PC-9 (cell line): ENCODE measurements at regions of chr9 and their contacts with region 1.

Region 1: DNA sequence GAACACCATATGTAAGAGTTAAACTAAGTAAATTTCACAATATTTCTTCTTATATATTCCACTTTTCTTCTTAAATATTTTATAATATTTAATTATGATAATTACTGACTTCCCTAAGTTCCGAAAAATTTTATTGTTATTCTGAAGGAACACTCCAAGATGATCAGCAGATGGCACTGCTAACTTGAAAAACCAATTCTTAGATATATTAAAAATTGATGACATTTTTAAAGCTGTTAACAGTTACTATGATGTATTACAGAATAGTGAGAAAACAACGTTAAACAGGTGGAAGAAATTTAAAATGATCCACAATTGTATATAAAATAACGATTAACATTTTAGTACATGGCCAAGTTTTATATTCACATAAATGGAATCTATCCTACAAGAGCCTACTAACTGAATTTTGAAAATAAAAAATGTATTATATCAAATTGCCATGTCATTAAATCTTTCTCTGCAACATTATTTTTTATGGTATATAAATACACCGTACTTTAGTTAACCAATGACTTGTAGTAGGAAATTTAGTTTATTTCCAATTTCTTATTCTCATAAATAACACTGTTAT is 30.1 kb upstream of the MUSK start:
- DNase-seq: peak in 1 of 2 experiments; percentile 52
- H3K4me3 ChIP-seq: no peak overlapping the region
- H3K27ac ChIP-seq: no peak overlapping the region
- H3K4me1 ChIP-seq: peaks cover 7% of the 10 kb centered on the region; the same call in 1 of the 2 replicates
- H3K27me3 ChIP-seq: no peaks in the 10 kb centered on the region
- CTCF ChIP-seq: peak; percentile 72

Region 2: DNA sequence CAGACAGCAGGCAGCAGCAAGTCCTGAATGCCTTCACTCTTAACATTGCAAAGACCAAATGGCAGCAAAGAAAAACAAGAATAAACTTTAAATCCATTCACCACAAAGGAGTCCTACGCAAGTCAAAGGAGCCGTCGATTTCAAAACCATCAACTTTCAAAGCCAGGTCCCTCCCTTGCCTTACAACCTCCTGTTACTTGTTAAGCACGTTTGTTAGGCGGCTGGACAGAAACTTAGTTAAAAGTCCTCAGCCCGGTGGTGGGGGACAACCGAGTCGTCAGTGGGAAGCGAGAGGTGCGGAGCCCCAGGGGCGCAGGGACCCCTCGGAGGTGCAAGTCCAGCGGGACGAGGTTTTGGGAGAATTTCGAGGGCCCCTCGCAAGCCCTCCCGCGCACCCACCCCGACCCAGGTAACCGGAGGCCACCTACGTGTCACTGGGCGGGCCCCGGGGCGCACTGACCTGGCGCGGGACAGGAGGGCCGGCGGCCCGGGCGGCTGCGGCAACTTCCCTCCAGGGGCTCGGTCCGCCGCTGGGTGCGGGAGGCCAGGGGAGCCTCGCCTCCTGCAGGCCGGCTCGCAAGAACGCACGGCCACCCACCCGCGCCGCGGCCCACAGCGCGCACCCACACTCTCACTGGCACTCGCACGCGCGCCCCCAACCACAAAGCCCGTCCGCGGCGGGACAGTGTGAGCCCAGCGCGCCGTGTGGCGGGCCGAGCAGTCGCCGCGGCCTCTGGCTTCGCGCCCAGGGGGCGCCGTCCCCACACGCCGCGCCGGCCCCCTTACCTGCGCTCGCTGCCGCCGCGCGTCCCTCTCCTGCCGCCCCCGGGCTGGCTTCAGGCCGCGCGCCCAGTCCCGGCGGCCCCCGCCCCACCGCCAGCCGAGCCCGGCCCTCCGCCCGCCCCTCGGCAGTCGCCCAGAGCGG is 399.2 kb after region 1 on chr9:
- CTCF ChIA-PET with region 1: no interaction called
- POLR2A ChIA-PET with region 1: interaction called, 8 read pairs
- intact Hi-C with region 1: loop called (anchors 5 kb)
- DNase-seq: peak in 1 of 2 experiments; percentile 57
- H3K4me3 ChIP-seq: peak overlapping the region; percentile 74
- H3K27ac ChIP-seq: peak overlapping the region; percentile 3; the same call in 1 of the 2 replicates
- H3K4me1 ChIP-seq: peaks cover 16% of the 10 kb centered on the region
- H3K27me3 ChIP-seq: no peaks in the 10 kb centered on the region
- CTCF ChIP-seq: no peak; the same call in 1 of the 2 replicates

Region 3: GRCh38 chr9:111149016-111149759 is 510.7 kb after region 1 on chr9:
- CTCF ChIA-PET with region 1: no interaction called
- POLR2A ChIA-PET with region 1: no interaction called
- intact Hi-C with region 1: loop called (anchors 10 kb)
- DNase-seq: no peak
- H3K4me3 ChIP-seq: no peak overlapping the region
- H3K27ac ChIP-seq: no peak overlapping the region
- H3K4me1 ChIP-seq: no peaks in the 10 kb centered on the region
- H3K27me3 ChIP-seq: no peaks in the 10 kb centered on the region
- CTCF ChIP-seq: no peak

Region 4: DNA sequence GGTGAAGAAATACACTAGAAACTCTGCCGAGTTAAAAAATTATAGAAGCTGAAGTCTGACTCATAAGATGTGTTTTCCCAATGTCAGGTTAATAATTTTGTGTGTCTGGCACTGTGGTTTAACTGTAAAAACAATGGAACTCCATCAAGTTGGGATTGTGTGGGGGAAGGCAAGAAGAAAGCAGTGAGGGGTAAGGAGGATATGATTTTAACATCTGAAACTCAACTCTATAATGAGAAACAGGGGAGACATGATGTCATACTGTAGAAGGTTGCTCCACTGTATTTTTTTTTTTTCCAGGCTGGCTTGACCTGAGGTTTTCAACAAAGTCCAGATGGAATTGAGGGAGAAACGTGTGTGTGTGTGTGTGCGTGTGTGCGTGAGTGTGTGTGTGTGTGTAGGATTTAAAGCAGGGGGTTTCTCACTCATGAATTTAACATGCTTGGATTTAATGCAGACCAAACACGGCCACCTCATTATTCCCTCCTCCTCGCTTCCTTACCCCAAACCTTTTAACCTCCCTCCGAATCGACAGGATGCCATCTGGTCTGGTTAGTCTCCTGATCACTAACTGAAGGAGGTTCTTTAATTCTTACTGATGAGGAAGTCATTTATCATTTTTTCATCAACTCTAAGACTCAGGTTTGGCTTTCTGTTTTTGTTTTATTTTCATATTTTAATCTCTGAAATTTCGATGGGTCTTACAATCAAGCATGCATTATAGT is 540.0 kb after region 1 on chr9:
- CTCF ChIA-PET with region 1: no interaction called
- POLR2A ChIA-PET with region 1: no interaction called
- intact Hi-C with region 1: loop called (anchors 10 kb)
- DNase-seq: no peak
- H3K4me3 ChIP-seq: no peak overlapping the region
- H3K27ac ChIP-seq: no peak overlapping the region
- H3K4me1 ChIP-seq: no peaks in the 10 kb centered on the region
- H3K27me3 ChIP-seq: no peaks in the 10 kb centered on the region
- CTCF ChIP-seq: no peak

Region 5: DNA sequence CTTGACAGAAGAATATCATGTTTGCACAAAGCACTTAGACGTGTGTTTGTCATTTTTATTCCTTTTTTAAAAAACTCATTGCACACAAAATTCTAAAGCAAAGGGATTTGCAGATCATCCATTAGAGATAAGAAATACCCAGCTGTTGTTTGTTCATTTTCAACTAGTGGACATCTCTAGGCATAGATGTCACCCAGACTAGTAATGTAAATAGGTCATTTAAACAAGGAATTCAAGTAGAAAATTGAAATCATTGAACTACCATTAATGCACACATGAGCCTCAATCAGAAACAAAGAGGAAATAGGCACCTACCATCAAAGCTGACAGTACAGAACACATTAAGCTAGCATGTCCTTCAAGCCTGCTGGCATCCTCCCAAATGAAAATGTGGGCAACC is 584.3 kb after region 1 on chr9:
- CTCF ChIA-PET with region 1: no interaction called
- POLR2A ChIA-PET with region 1: no interaction called
- intact Hi-C with region 1: no loop called
- DNase-seq: no peak
- H3K4me3 ChIP-seq: no peak overlapping the region
- H3K27ac ChIP-seq: no peak overlapping the region
- H3K4me1 ChIP-seq: no peaks in the 10 kb centered on the region
- H3K27me3 ChIP-seq: no peaks in the 10 kb centered on the region
- CTCF ChIP-seq: no peak

Region 6: GRCh38 chr9:111399772-111400563 is 761.5 kb after region 1 on chr9:
- CTCF ChIA-PET with region 1: no interaction called
- POLR2A ChIA-PET with region 1: no interaction called
- intact Hi-C with region 1: loop called (anchors 5 kb)
- DNase-seq: peak; percentile 20 to 52
- H3K4me3 ChIP-seq: no peak overlapping the region
- H3K27ac ChIP-seq: no peak overlapping the region
- H3K4me1 ChIP-seq: no peaks in the 10 kb centered on the region
- H3K27me3 ChIP-seq: no peaks in the 10 kb centered on the region
- CTCF ChIP-seq: peak; percentile 69